HEK293 (cell line): ENCODE measurements at regions of chr5 and their contacts with region 1.

Region 1: GRCh38 chr5:134851307-134851923 is 5.6 kb downstream of the C5orf24 start:
- H3K4me3 ChIP-seq: no peak overlapping the region
- H3K27ac ChIP-seq: 0 out of 2 replicates have a peak overlapping the region, but pooled peaks have one; percentile 4
- H3K4me1 ChIP-seq: peaks cover 11% of the 10 kb centered on the region; the same call in 1 of the 2 replicates
- CTCF ChIP-seq: peak; percentile 35; the same call in 1 of the 2 replicates

Region 2: DNA sequence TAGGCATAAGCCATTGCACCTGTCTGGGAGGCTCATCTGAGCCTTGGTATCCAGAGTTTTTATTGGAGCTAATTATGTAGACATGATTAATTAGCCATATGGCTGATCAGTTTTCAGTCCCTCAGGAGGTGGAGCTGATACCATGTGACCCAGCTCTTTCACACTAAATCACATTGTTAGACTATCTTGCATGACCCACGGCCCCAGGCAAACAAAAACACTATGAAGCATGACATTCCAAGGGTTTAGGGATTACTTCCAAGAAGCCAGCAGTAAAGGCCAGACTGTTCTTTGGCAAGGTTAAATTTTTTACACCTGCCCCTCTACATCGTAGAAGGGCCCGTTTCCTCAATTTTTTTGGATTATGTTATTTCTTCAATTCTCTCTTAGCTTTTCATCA is 10.6 kb before region 1 on chr5:
- CTCF ChIA-PET with region 1: interaction called, 16 read pairs
- POLR2A ChIA-PET with region 1: interaction called, 4 read pairs
- H3K4me3 ChIP-seq: no peak overlapping the region
- H3K27ac ChIP-seq: no peak overlapping the region
- H3K4me1 ChIP-seq: no peaks in the 10 kb centered on the region
- CTCF ChIP-seq: no peak

Region 3: DNA sequence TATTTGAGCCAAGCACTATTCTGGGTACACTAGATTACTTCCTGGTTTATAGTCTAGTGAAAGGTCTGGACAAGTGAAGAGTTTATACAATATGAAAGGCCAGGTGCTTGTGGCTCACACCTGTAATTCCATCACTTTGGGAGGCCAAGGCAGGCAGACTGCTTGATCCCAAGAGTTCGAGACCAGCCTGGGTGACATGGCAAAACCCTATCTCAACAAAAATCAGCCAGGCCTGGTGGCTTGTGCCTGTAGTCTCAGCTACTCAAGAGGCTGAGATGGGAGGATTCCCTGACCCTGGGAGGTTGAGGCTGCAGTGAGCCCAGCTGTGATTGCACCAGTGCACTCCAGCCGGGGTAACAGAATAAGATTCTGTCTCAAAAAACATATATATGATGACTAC is 13.3 kb after region 1 on chr5:
- CTCF ChIA-PET with region 1: interaction called, 12 read pairs
- POLR2A ChIA-PET with region 1: interaction called, 15 read pairs
- H3K4me3 ChIP-seq: no peak overlapping the region
- H3K27ac ChIP-seq: no peak overlapping the region
- H3K4me1 ChIP-seq: no peaks in the 10 kb centered on the region
- CTCF ChIP-seq: no peak